ENCODE measurements at regions of chr1 and their contacts with region 1.

Region 1: DNA sequence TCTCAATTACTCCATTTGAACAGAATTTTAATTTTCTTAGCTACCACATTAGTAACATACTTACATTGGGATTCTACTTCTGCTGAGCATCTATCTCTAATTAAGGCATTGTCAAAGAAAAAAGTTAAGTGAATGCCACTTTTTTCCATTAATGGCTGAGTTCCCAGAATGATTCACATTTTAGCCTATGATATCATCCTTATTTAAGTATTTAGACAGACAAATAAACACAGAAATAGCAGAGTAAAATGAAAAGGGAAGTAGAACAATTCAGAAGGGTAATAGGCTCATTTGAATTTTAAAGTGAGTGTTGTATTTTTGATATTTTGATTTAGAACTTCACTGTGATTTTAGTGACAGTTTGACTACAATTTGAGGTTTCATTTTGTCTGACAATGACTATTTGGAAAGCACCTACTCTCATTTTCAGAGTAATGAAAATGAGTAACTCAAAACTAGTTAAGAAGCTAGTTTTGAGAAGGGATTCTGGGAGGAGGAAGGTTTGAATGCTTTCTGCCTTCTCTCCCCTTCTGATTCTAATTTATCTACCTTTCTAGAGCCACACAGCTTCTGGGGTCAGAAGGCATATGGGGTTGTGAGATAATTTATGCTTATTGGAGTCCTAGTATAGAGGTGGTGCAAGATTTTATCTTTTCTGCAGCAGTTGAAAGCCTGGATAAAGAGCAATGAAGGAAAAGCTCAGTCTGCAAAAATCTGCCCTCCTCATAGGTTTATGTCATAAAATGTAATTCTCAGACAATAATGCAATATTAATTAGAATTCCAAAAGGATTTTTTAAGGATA is 15.5 kb downstream of the LYPLAL1 start:
- DNase-seq: peak; percentile 78
- ATAC-seq: peak; percentile 69
- H3K4me3 ChIP-seq: peak overlapping the region; percentile 4; the same call in 1 of the 2 replicates
- H3K27ac ChIP-seq: peak overlapping the region; percentile 4; the same call in 1 of the 2 replicates
- H3K4me1 ChIP-seq: peaks cover 17% of the 10 kb centered on the region
- H3K27me3 ChIP-seq: no peaks in the 10 kb centered on the region
- CTCF ChIP-seq: no peak

Region 2: GRCh38 chr1:218809625-218810024 is 379.6 kb before region 1 on chr1:
- CTCF ChIA-PET with region 1: no interaction called
- POLR2A ChIA-PET with region 1: no interaction called
- intact Hi-C with region 1: loop called (anchors 10 kb)
- DNase-seq: peak; percentile 19
- ATAC-seq: peak; percentile 71
- H3K4me3 ChIP-seq: no peak overlapping the region
- H3K27ac ChIP-seq: no peak overlapping the region
- H3K4me1 ChIP-seq: peaks cover 20% of the 10 kb centered on the region
- H3K27me3 ChIP-seq: no peaks in the 10 kb centered on the region
- CTCF ChIP-seq: no peak